ENCODE measurements at regions of chr19 and their contacts with region 1.

Region 1: DNA sequence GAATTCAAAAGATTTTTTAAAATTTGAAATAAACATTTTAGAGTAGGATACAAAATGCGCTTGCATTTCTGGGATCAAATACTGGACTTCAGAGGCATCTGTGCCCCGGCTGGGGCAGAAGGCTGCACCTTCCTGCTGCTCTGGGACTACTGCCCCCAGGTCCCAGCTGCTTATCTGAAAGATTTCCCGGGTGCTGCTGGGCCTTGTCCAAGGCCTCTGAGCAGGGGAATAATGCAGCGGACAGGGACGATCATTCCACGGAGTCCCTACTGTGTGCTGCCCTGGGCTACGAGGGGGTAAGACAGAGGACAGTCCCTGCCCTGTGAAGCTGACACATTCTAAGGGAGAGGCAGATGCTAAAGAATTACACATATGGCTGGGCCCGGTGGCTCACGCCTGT is 33.1 kb upstream of the NCCRP1 start:
- DNase-seq: no peak
- H3K4me3 ChIP-seq: no peak overlapping the region
- H3K27ac ChIP-seq: no peak overlapping the region
- H3K4me1 ChIP-seq: peaks cover 9% of the 10 kb centered on the region
- H3K27me3 ChIP-seq: no peaks in the 10 kb centered on the region
- CTCF ChIP-seq: no peak
- POLR2A ChIP-seq: no peak

Region 2: DNA sequence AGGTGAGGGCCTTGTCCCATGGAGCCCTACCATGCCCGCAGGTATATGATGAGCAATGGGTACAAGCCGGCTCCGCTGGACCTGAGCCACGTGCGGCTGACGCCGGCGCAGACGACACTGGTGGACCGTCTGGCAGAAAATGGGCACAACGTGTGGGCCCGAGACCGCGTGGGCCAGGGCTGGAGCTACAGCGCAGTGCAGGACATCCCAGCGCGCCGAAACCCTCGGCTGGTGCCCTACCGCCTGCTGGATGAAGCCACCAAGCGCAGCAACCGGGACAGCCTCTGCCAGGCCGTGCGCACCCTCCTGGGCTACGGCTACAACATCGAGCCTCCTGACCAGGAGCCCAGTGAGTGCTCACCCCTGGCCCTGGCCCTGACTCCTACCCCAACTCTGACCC is 697.6 kb before region 1 on chr19:
- CTCF ChIA-PET with region 1: no interaction called
- POLR2A ChIA-PET with region 1: interaction called, 12 read pairs
- dilution Hi-C with region 1: no loop called
- intact Hi-C with region 1: no loop called
- DNase-seq: no peak
- H3K4me3 ChIP-seq: no peak overlapping the region
- H3K27ac ChIP-seq: no peak overlapping the region
- H3K4me1 ChIP-seq: no peaks in the 10 kb centered on the region
- H3K27me3 ChIP-seq: no peaks in the 10 kb centered on the region
- CTCF ChIP-seq: no peak
- POLR2A ChIP-seq: no peak

Measured in endothelial cell of umbilical vein (primary cell).